Caco-2 (cell line): ENCODE measurements at regions of chr19 and their contacts with region 1.

Region 1: GRCh38 chr19:16446724-16447368 is 24.9 kb downstream of the EPS15L1 start:
- DNase-seq: peak; percentile 79 to 82
- H3K4me3 ChIP-seq: no peak overlapping the region
- H3K4me3 Mint-ChIP-seq: peak overlapping the region; percentile 60
- H3K27ac Mint-ChIP-seq: peak overlapping the region; percentile 86
- H3K4me1 ChIP-seq: peaks cover 25% of the 10 kb centered on the region
- H3K4me1 Mint-ChIP-seq: peaks cover 40% of the 10 kb centered on the region
- H3K27me3 ChIP-seq: no peaks in the 10 kb centered on the region
- H3K27me3 Mint-ChIP-seq: no peaks in the 10 kb centered on the region
- CTCF ChIP-seq: no peak

Region 2: DNA sequence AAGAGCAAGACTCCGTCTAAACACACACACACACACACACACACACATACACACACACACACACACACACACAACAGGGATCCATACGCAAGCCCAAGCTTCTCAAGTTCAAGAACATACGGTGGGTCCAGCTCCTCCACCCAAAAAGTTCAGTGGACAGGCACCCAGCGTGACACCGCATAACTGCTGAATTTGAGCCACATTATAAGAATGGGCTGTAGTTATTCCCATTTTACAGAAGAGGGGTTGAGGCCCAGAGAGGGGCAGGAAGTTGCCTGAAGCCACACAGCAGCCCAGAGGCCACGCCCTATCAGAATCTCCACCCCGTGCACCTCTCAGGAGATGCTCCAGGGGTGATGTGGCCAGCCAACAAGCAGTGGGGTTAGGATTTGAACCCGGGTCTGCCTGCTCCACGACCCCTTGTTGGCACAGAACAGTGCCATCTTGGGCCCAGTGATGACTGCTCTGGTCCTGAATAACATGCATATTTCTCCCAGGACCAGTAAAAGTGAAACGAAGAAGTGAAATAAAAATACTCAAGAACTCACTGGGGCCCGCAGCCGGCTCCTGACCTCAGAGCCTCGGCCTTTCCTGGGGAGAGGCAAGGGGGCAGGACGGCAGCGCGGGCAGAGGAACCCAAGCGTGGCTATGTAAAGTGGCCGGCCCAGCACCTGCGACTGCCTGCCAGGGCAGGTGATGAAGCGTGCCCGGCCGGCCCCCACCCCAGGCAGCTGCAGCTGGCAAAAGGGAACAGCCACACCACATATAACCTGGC is 187.3 kb before region 1 on chr19:
- CTCF ChIA-PET with region 1: no interaction called
- POLR2A ChIA-PET with region 1: no interaction called
- intact Hi-C with region 1: no loop called
- DNase-seq: no peak
- H3K4me3 ChIP-seq: no peak overlapping the region
- H3K4me3 Mint-ChIP-seq: no peak overlapping the region
- H3K27ac Mint-ChIP-seq: no peak overlapping the region
- H3K4me1 ChIP-seq: peaks cover 24% of the 10 kb centered on the region
- H3K4me1 Mint-ChIP-seq: peaks cover 19% of the 10 kb centered on the region
- H3K27me3 ChIP-seq: no peaks in the 10 kb centered on the region
- H3K27me3 Mint-ChIP-seq: no peaks in the 10 kb centered on the region
- CTCF ChIP-seq: no peak

Region 3: DNA sequence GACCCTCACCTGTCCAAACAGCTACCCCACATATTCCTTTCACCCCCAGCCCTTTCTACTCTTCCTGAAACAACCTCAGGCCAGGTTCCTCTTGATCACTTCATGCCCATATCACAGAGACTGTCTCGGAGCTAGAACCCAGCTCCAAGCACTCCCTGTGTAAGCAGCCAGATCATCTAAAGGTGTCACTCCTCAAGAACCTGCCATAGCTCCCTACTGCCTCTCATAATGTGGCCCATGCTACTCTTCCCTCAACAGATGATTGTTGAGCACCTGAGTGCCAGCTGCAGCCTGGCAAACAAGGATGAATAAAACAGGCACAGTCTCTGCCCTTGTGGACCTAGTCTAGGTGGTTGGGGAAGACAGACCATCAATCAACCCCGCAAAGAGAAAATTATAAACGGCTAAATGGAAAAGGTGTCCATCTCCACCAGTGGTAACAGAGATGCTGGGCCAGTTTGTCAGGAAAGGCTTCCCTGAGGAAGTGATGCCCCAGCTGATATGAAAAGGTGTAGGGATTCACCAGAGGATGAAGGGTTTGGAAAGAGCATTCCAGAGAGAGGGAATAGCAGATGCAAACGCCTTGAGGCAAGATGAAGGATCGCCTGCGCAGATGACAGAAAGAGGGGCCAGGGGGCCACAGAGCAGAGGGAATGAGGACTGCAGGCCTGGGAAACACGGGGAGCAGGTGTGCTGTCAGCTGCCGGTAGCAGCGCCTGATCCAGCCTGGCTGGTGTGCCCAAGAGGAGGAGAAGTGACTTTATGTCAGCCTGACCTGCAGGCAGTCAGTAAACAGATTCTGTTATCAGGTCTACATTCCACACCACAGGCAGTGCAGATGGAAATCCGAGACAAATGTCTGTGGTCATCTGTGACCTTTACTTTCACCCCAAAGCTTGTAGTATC is 16.8 kb after region 1 on chr19:
- CTCF ChIA-PET with region 1: no interaction called
- POLR2A ChIA-PET with region 1: interaction called, 7 read pairs
- intact Hi-C with region 1: loop called (anchors 1 kb)
- DNase-seq: peak; percentile 68 to 77
- H3K4me3 ChIP-seq: no peak overlapping the region
- H3K4me3 Mint-ChIP-seq: peak overlapping the region; percentile 37
- H3K27ac Mint-ChIP-seq: peak overlapping the region; percentile 63
- H3K4me1 ChIP-seq: peaks cover 27% of the 10 kb centered on the region
- H3K4me1 Mint-ChIP-seq: peaks cover 27% of the 10 kb centered on the region
- H3K27me3 ChIP-seq: no peaks in the 10 kb centered on the region
- H3K27me3 Mint-ChIP-seq: no peaks in the 10 kb centered on the region
- CTCF ChIP-seq: no peak

Region 4: GRCh38 chr19:16495982-16496612 is 49.3 kb after region 1 on chr19 and contains the starts of genes C19orf44 and CALR3:
- CTCF ChIA-PET with region 1: no interaction called
- POLR2A ChIA-PET with region 1: no interaction called
- intact Hi-C with region 1: loop called (anchors 10 kb)
- DNase-seq: peak; percentile 98
- H3K4me3 ChIP-seq: peak within 1 kb of the TSS; percentile 67
- H3K4me3 Mint-ChIP-seq: peak within 1 kb of the TSS; percentile 91
- H3K27ac Mint-ChIP-seq: peak within 1 kb of the TSS; percentile 82
- H3K4me1 ChIP-seq: peaks cover 20% of the 10 kb centered on the region
- H3K4me1 Mint-ChIP-seq: no peaks in the 10 kb centered on the region
- H3K27me3 ChIP-seq: no peaks in the 10 kb centered on the region
- H3K27me3 Mint-ChIP-seq: no peaks in the 10 kb centered on the region
- CTCF ChIP-seq: no peak
- total RNA-seq, gene C19orf44: 3.4 and 4.6 TPM in 2 replicates
- total RNA-seq, gene CALR3: 0.32 TPM in 1 of 2 replicates, not detected in the other